ENCODE measurements at regions of chrX and their contacts with region 1.

Region 1: GRCh38 chrX:154348114-154348531 is 26.3 kb downstream of the FLNA start:
- DNase-seq: no peak
- ATAC-seq: no peak
- H3K4me3 Mint-ChIP-seq: no peak overlapping the region
- H3K27ac Mint-ChIP-seq: peak overlapping the region; percentile 59
- H3K4me1 Mint-ChIP-seq: peaks cover 43% of the 10 kb centered on the region
- H3K27me3 Mint-ChIP-seq: no peaks in the 10 kb centered on the region
- CTCF ChIP-seq: no peak

Region 2: GRCh38 chrX:154362085-154362742 is 14.1 kb after region 1 on chrX:
- CTCF ChIA-PET with region 1: no interaction called
- POLR2A ChIA-PET with region 1: interaction called, 56 read pairs
- intact Hi-C with region 1: no loop called
- DNase-seq: no peak
- ATAC-seq: no peak
- H3K4me3 Mint-ChIP-seq: no peak overlapping the region
- H3K27ac Mint-ChIP-seq: no peak overlapping the region
- H3K4me1 Mint-ChIP-seq: peaks cover 3% of the 10 kb centered on the region
- H3K27me3 Mint-ChIP-seq: no peaks in the 10 kb centered on the region
- CTCF ChIP-seq: no peak

Region 3: DNA sequence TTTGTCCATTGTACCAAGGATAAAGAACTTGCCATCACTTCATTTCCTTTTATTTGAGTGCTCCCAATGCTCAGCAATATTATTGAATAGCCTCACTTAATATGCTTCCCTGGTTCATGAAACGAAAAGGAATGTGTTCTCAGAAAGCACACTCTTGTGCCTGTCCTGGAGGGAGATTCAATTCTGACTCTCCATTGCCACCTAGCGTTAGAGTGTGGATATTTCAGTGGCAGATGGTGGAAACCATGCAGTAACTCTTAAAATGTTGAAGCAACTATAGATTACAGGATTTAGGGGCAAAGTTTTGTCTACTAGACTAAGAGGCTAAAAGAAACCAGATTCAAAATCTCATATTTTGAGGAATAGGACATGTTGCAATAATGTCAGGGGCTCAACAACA is 366.8 kb after region 1 on chrX:
- CTCF ChIA-PET with region 1: no interaction called
- POLR2A ChIA-PET with region 1: no interaction called
- intact Hi-C with region 1: no loop called
- DNase-seq: no peak
- ATAC-seq: peak; percentile 67
- H3K4me3 Mint-ChIP-seq: no peak overlapping the region
- H3K27ac Mint-ChIP-seq: no peak overlapping the region
- H3K4me1 Mint-ChIP-seq: peaks cover 52% of the 10 kb centered on the region
- H3K27me3 Mint-ChIP-seq: no peaks in the 10 kb centered on the region
- CTCF ChIP-seq: no peak